Activated B cell treated with CpG ODN at 0.5 μM for 24 hours (primary cell): ENCODE measurements at regions of chr6 and their contacts with region 1.

Region 1: GRCh38 chr6:136593748-136594490 is 43.7 kb upstream of the MAP7 start:
- DNase-seq: no peak
- ATAC-seq: peak; percentile 94
- H3K4me3 Mint-ChIP-seq: peak overlapping the region; percentile 61
- H3K27ac Mint-ChIP-seq: peak overlapping the region; percentile 81
- H3K4me1 Mint-ChIP-seq: peaks cover 29% of the 10 kb centered on the region
- H3K27me3 Mint-ChIP-seq: no peaks in the 10 kb centered on the region
- CTCF ChIP-seq: no peak

Region 2: DNA sequence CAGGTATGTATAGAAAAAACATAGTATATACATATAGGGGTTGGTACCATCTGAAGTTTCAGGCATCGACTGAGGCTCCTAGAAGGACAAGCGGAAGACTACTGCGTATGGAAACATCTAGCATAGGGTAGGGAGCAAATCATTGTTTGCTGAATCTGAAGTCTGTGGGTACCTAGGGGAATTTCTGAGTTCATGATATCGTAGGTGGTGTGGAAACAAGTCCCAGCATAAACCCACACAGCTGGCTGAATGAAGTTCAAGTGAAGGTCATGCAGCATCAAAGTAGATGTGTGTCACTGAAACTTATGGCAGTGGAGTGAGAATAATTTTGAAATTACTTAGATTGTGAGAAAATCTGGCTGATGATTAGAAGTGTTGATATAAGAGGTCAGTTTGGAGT is 83.1 kb before region 1 on chr6:
- CTCF ChIA-PET with region 1: no interaction called
- POLR2A ChIA-PET with region 1: no interaction called
- intact Hi-C with region 1: no loop called
- DNase-seq: no peak
- ATAC-seq: no peak
- H3K4me3 Mint-ChIP-seq: no peak overlapping the region
- H3K27ac Mint-ChIP-seq: no peak overlapping the region
- H3K4me1 Mint-ChIP-seq: no peaks in the 10 kb centered on the region
- H3K27me3 Mint-ChIP-seq: peaks cover 9% of the 10 kb centered on the region
- CTCF ChIP-seq: no peak

Region 3: GRCh38 chr6:136582711-136583471 is 11.0 kb before region 1 on chr6:
- CTCF ChIA-PET with region 1: no interaction called
- POLR2A ChIA-PET with region 1: no interaction called
- intact Hi-C with region 1: loop called (anchors 1 kb)
- DNase-seq: no peak
- ATAC-seq: peak; percentile 28
- H3K4me3 Mint-ChIP-seq: no peak overlapping the region
- H3K27ac Mint-ChIP-seq: no peak overlapping the region
- H3K4me1 Mint-ChIP-seq: peaks cover 5% of the 10 kb centered on the region
- H3K27me3 Mint-ChIP-seq: no peaks in the 10 kb centered on the region
- CTCF ChIP-seq: no peak

Region 4: DNA sequence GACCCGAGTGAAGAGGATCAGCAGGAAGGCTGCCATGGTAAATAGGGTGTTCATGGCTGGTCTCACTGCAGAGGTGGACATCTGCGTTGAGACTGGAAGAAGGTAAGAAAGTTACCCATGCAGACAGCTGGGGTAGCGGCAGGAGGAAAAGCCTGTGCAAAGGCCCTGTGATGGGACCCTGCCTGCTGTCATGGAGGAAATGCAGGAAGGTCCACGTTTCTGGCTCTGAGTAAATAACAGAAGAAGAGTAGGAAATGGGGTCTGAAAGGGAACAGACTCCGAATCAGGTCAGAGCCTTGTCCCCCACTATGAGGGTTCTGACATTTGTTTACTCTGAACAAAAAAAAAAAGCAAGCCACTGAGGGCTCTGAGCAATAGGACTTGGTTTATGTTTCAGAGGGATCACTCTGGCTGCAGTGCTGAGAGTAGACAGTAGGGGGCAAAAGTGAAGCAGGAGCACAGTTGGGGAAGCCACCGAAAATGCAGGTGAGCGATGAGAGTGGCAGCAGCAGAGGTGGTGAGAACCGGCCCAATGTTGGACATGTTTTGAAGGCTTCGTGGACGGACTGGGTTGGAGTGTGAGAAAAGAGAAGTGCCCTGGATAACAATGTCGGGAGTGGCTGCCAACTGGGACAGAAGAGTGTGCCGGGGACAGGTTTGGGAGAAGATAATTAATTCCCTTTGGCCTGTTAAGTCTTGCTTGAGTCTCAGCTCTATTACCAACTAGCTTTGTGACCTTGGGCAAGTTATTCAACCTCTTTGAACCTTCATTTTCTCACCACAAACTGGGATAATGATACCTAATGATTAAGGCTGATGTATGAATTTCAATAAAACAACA is 14.2 kb after region 1 on chr6:
- CTCF ChIA-PET with region 1: interaction called, 4 read pairs
- POLR2A ChIA-PET with region 1: no interaction called
- intact Hi-C with region 1: loop called (anchors 2 kb)
- DNase-seq: peak; percentile 53
- ATAC-seq: peak; percentile 99
- H3K4me3 Mint-ChIP-seq: no peak overlapping the region
- H3K27ac Mint-ChIP-seq: no peak overlapping the region
- H3K4me1 Mint-ChIP-seq: peaks cover 3% of the 10 kb centered on the region
- H3K27me3 Mint-ChIP-seq: no peaks in the 10 kb centered on the region
- CTCF ChIP-seq: peak; percentile 63

Region 5: GRCh38 chr6:136822376-136823127 is 228.6 kb after region 1 on chr6 and contains the start of gene PEX7:
- CTCF ChIA-PET with region 1: no interaction called
- POLR2A ChIA-PET with region 1: interaction called, 7 read pairs
- intact Hi-C with region 1: loop called (anchors 1 kb)
- DNase-seq: peak; percentile 86
- ATAC-seq: peak; percentile 91
- H3K4me3 Mint-ChIP-seq: peak within 1 kb of the TSS; percentile 94
- H3K27ac Mint-ChIP-seq: peak within 1 kb of the TSS; percentile 98
- H3K4me1 Mint-ChIP-seq: peaks cover 16% of the 10 kb centered on the region
- H3K27me3 Mint-ChIP-seq: peaks cover 4% of the 10 kb centered on the region
- CTCF ChIP-seq: no peak
- total RNA-seq, gene PEX7: 5.0 and 6.8 TPM in 2 replicates